Common myeloid progenitor, CD34-positive (primary cell): ENCODE measurements at regions of chr2 and their contacts with region 1.

Region 1: DNA sequence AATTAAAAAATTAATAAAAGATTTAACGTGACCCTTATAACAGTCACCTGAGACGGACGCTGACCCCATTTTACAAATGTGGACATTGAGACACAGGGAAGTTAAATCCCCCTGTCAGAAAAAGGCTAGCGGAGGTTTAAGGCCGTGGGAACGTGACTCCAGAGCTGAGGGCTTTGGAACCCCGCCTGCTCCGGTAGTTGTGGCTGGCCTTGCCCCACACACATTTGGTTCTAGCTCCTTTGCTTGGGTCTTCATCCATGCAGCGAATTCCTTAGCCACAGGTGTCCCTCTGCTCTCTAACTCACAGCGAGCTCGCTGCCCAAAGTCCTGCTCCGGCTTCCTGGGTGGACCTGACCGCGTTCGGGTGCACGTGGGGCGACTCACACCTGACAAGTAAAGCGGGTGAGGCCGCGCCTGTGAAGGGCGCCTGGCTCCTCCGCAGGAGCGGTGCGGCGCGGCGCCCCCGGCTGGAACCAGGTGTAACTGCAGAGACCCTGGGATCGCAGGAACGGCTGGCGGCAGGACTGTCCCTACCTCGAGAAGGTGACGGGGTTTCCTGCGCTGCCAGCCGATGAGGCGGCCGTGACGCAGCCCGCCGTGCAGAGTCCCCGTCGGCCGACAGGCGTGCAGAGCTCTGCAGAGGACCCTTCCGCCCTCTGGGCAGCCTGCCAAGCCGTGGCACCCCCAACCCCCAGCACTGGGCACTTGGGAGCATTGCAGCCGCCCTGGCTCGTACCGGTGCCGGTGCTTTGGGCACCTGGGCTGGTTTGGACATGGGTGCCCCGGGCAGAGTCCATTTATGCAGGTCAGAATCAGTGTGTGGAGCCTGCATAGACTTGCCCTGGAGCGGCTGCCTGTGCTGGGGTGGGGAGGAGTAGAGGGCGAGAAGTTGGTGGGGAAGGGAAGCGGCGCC is 2.4 kb upstream of the PROC start:
- DNase-seq: peak; percentile 79 to 92 (median 89)
- H3K4me3 ChIP-seq: peak overlapping the region; percentile 25 to 82 (median 67)
- H3K27ac ChIP-seq: no peak overlapping the region
- H3K4me1 ChIP-seq: peaks cover 3 to 58% (median 27%) of the 10 kb centered on the region in 4 experiments
- H3K27me3 ChIP-seq: peaks cover 0 to 1% (median 0%) of the 10 kb centered on the region in 5 experiments

Region 2: GRCh38 chr2:127365211-127365643 is 50.6 kb before region 1 on chr2:
- CTCF ChIA-PET with region 1: interaction called, 17 read pairs
- POLR2A ChIA-PET with region 1: no interaction called
- DNase-seq: peak in 1 of 3 donors; percentile 21
- H3K4me3 ChIP-seq: no peak overlapping the region
- H3K27ac ChIP-seq: no peak overlapping the region
- H3K4me1 ChIP-seq: peaks cover 0 to 6% (median 0%) of the 10 kb centered on the region in 4 experiments
- H3K27me3 ChIP-seq: no peaks in the 10 kb centered on the region

Region 3: DNA sequence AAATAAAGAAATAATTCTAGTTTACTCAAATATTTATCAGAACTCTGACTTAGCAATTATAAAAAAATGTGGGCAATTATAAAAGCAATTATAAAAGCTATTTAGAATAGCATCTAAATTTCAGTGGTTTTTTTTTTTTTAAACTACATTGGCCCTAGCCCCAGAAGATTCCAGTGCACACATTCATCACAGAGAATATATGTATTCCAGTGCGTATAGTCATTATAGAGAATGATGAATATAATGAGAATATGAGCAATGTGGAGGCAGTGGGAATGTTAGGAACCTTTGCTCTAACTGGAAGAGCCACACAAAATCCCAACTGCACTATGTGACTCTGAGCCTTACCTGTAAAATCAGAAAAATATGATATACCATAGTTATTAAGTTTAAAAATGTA is 38.6 kb before region 1 on chr2:
- CTCF ChIA-PET with region 1: interaction called, 13 read pairs
- POLR2A ChIA-PET with region 1: interaction called, 4 read pairs
- DNase-seq: no peak
- H3K4me3 ChIP-seq: no peak overlapping the region
- H3K27ac ChIP-seq: no peak overlapping the region
- H3K4me1 ChIP-seq: no peaks in the 10 kb centered on the region
- H3K27me3 ChIP-seq: no peaks in the 10 kb centered on the region

Region 4: GRCh38 chr2:127387655-127388422 is 28.0 kb before region 1 on chr2 and contains the start of gene MAP3K2:
- CTCF ChIA-PET with region 1: interaction called, 37 read pairs
- POLR2A ChIA-PET with region 1: interaction called, 6 read pairs
- DNase-seq: peak; percentile 91 to 94 (median 94)
- H3K4me3 ChIP-seq: peak within 1 kb of the TSS; percentile 70 to 90 (median 84)
- H3K27ac ChIP-seq: peak within 1 kb of the TSS; percentile 92 to 95
- H3K4me1 ChIP-seq: peaks cover 20 to 65% (median 37%) of the 10 kb centered on the region in 4 experiments
- H3K27me3 ChIP-seq: no peaks in the 10 kb centered on the region

Region 5: GRCh38 chr2:127392828-127393578 is 22.8 kb before region 1 on chr2:
- CTCF ChIA-PET with region 1: interaction called, 37 read pairs
- POLR2A ChIA-PET with region 1: interaction called, 6 read pairs
- DNase-seq: no peak
- H3K4me3 ChIP-seq: no peak overlapping the region
- H3K27ac ChIP-seq: no peak overlapping the region
- H3K4me1 ChIP-seq: peaks cover 13 to 48% (median 29%) of the 10 kb centered on the region in 4 experiments
- H3K27me3 ChIP-seq: no peaks in the 10 kb centered on the region

Region 6: GRCh38 chr2:127437056-127437455 is 21.2 kb after region 1 on chr2:
- CTCF ChIA-PET with region 1: interaction called, 10 read pairs
- POLR2A ChIA-PET with region 1: no interaction called
- DNase-seq: no peak
- H3K4me3 ChIP-seq: no peak overlapping the region
- H3K27ac ChIP-seq: no peak overlapping the region
- H3K4me1 ChIP-seq: no peaks in the 10 kb centered on the region
- H3K27me3 ChIP-seq: no peaks in the 10 kb centered on the region

Region 7: GRCh38 chr2:127609031-127609751 is 193.3 kb after region 1 on chr2:
- CTCF ChIA-PET with region 1: no interaction called
- POLR2A ChIA-PET with region 1: no interaction called
- DNase-seq: no peak
- H3K4me3 ChIP-seq: no peak overlapping the region
- H3K27ac ChIP-seq: no peak overlapping the region
- H3K4me1 ChIP-seq: peaks cover 0 to 7% (median 4%) of the 10 kb centered on the region in 4 experiments
- H3K27me3 ChIP-seq: no peaks in the 10 kb centered on the region